Calu3 (cell line): ENCODE measurements at regions of chr11 and their contacts with region 1.

Region 1: GRCh38 chr11:26319906-26320305 is 12.0 kb upstream of the ANO3 start:
- DNase-seq: no peak
- H3K4me3 Mint-ChIP-seq: no peak overlapping the region
- H3K27ac Mint-ChIP-seq: no peak overlapping the region
- H3K4me1 Mint-ChIP-seq: peaks cover 81% of the 10 kb centered on the region
- H3K27me3 Mint-ChIP-seq: no peaks in the 10 kb centered on the region
- CTCF ChIP-seq: no peak

Region 2: DNA sequence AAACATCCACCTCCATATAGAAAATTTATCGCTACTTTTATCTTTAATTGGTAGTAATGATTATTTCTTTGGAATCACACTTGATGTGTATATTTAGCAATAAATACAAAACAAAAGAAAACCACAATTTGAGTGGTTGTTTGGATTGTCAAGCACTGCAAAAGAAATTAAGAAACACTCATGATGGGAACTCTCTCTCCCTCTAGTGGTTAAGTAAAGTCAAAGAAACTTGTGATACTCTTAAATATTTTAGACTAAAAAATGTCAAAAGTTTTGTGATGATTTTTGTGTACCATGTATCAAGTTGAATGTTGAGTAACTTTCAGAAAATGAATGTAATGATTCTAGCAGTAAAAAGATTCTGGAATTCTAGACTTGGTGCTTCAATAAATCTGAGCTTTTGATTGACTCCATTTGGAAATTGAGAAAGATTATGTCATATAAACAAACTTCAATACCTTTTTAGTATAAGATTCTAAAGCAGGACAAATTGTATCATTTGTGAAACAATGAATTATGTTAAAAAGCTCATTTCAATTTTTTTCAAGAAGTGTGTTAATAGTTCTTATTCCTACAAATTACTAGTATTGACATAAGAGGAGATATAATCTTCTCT is 231.4 kb after region 1 on chr11:
- CTCF ChIA-PET with region 1: no interaction called
- intact Hi-C with region 1: loop called (anchors 10 kb)
- DNase-seq: no peak
- H3K4me3 Mint-ChIP-seq: no peak overlapping the region
- H3K27ac Mint-ChIP-seq: no peak overlapping the region
- H3K4me1 Mint-ChIP-seq: no peaks in the 10 kb centered on the region
- H3K27me3 Mint-ChIP-seq: no peaks in the 10 kb centered on the region
- CTCF ChIP-seq: peak; percentile 10